ENCODE measurements at regions of chr2 and their contacts with region 1.

Region 1: GRCh38 chr2:189580658-189581353 is at the start of gene SLC40A1:
- DNase-seq: peak; percentile 67
- ATAC-seq: peak; percentile 96
- H3K4me3 ChIP-seq: peak within 1 kb of the TSS; percentile 64 to 78 (median 77)
- H3K27ac ChIP-seq: peak within 1 kb of the TSS; percentile 56
- H3K4me1 ChIP-seq: peaks cover 66% of the 10 kb centered on the region
- H3K27me3 ChIP-seq: peaks cover 0 to 11% of the 10 kb centered on the region in 2 experiments; a peak in 2 of 5 replicates
- CTCF ChIP-seq: no peak
- EP300 ChIP-seq: no peak
- POLR2A ChIP-seq: peak; percentile 73 to 91
- RAD21 ChIP-seq: peak; percentile 72
- total RNA-seq, gene SLC40A1: 10.6 and 19.2 TPM in 2 replicates

Region 2: GRCh38 chr2:188835821-188836220 is 745.0 kb before region 1 on chr2:
- CTCF ChIA-PET with region 1: no interaction called
- POLR2A ChIA-PET with region 1: no interaction called
- in situ Hi-C with region 1: no loop called
- intact Hi-C with region 1: no loop called
- DNase-seq: no peak
- ATAC-seq: no peak
- H3K4me3 ChIP-seq: no peak overlapping the region
- H3K27ac ChIP-seq: no peak overlapping the region
- H3K4me1 ChIP-seq: no peaks in the 10 kb centered on the region
- H3K27me3 ChIP-seq: no peaks in the 10 kb centered on the region
- CTCF ChIP-seq: no peak
- EP300 ChIP-seq: no peak
- POLR2A ChIP-seq: no peak
- RAD21 ChIP-seq: no peak

Region 3: GRCh38 chr2:189008403-189009262 is 572.2 kb before region 1 on chr2:
- CTCF ChIA-PET with region 1: no interaction called
- POLR2A ChIA-PET with region 1: no interaction called
- in situ Hi-C with region 1: no loop called
- intact Hi-C with region 1: no loop called
- DNase-seq: no peak
- ATAC-seq: no peak
- H3K4me3 ChIP-seq: no peak overlapping the region
- H3K27ac ChIP-seq: no peak overlapping the region
- H3K4me1 ChIP-seq: no peaks in the 10 kb centered on the region
- H3K27me3 ChIP-seq: no peaks in the 10 kb centered on the region
- CTCF ChIP-seq: no peak
- EP300 ChIP-seq: no peak
- POLR2A ChIP-seq: no peak
- RAD21 ChIP-seq: no peak

Region 4: DNA sequence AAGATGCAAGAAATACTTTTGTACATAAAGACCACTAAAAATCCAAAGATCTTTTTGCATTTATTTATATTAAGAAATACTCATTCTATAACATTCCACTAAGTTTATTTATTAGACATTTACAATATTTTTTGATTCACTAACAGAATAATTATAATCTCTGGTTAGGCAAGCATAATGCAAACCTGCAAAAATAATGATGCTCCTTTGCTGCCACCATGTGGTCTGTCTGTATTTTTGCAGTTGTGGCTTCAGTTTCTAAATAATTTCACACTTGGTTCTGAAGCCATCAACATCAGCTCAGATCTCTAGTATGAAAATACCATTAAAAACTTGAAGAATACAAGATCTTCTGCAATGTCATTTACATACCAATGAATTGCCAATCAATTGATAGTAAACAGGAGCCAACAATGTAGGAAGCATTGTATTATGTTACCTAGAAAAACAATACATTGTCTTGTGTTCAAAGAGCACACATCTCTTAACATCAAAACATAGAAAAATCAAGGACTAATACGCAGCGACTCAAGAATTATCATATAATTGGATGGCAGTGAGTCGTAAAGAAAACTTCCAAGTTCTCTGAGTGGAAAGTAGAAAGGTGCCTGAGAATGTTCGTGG is 168.4 kb before region 1 on chr2:
- CTCF ChIA-PET with region 1: no interaction called
- POLR2A ChIA-PET with region 1: no interaction called
- in situ Hi-C with region 1: no loop called
- intact Hi-C with region 1: no loop called
- DNase-seq: peak; percentile 39
- ATAC-seq: peak; percentile 75
- H3K4me3 ChIP-seq: no peak overlapping the region
- H3K27ac ChIP-seq: no peak overlapping the region
- H3K4me1 ChIP-seq: no peaks in the 10 kb centered on the region
- H3K27me3 ChIP-seq: no peaks in the 10 kb centered on the region
- CTCF ChIP-seq: peak; percentile 80
- EP300 ChIP-seq: no peak
- POLR2A ChIP-seq: no peak
- RAD21 ChIP-seq: peak; percentile 68

Region 5: GRCh38 chr2:189440947-189441708 is 139.7 kb before region 1 on chr2 and contains the start of gene WDR75:
- CTCF ChIA-PET with region 1: no interaction called
- POLR2A ChIA-PET with region 1: interaction called, 12 read pairs
- in situ Hi-C with region 1: no loop called
- intact Hi-C with region 1: loop called (anchors 1 kb)
- DNase-seq: peak; percentile 95
- ATAC-seq: peak; percentile 99
- H3K4me3 ChIP-seq: peak within 1 kb of the TSS; percentile 90 to 94 (median 93)
- H3K27ac ChIP-seq: peak within 1 kb of the TSS; percentile 82
- H3K4me1 ChIP-seq: peaks cover 45% of the 10 kb centered on the region
- H3K27me3 ChIP-seq: no peaks in the 10 kb centered on the region; a peak in 1 of 5 replicates
- CTCF ChIP-seq: no peak
- EP300 ChIP-seq: peak in 1 of 2 experiments; percentile 52; a peak in 2 of 4 replicates
- POLR2A ChIP-seq: peak; percentile 95
- RAD21 ChIP-seq: peak; percentile 27
- total RNA-seq, gene WDR75: 74.1 and 106 TPM in 2 replicates

Region 6: DNA sequence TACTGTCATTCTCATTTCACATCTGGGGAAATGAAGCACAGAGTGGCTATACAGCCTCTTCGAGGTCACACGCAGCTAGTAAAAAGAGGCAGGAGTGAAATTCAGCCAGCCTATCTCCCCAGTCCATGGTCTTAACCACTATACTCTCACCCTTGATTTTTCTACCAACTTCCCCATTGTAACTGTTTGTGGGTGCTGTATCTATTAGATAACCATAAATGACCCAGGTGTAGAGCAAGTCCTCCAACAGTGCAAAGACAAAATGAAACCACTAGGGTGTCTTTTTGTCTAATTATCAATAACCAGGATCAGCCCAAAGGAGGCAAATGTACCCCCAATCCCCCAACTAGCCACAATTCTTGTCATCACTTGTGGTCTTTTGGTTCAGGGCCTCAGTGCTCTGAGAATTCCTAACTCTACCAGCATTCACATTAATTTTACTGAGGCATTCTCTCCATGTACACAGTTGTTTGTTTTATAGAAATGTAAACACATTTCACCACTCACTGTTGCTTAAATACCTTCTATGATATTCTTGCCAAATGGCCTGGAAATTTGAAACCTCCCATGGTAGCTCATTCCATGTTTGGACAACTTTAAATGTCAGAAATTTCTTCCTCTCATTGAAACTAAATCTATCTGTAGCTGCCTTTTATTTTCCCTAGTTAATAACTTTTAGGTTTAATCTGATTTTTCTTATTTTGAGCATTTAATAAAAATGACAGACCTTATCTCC is 58.9 kb before region 1 on chr2:
- CTCF ChIA-PET with region 1: no interaction called
- POLR2A ChIA-PET with region 1: interaction called, 25 read pairs
- in situ Hi-C with region 1: no loop called
- intact Hi-C with region 1: loop called (anchors 1 kb)
- DNase-seq: peak; percentile 75
- ATAC-seq: peak; percentile 84
- H3K4me3 ChIP-seq: peak overlapping the region in 1 of 3 experiments; percentile 30; a peak in 1 of 6 replicates
- H3K27ac ChIP-seq: peak overlapping the region; percentile 57
- H3K4me1 ChIP-seq: peaks cover 36% of the 10 kb centered on the region
- H3K27me3 ChIP-seq: no peaks in the 10 kb centered on the region
- CTCF ChIP-seq: no peak
- EP300 ChIP-seq: peak in 1 of 2 experiments; percentile 68; a peak in 2 of 4 replicates
- POLR2A ChIP-seq: no peak
- RAD21 ChIP-seq: no peak

Region 7: DNA sequence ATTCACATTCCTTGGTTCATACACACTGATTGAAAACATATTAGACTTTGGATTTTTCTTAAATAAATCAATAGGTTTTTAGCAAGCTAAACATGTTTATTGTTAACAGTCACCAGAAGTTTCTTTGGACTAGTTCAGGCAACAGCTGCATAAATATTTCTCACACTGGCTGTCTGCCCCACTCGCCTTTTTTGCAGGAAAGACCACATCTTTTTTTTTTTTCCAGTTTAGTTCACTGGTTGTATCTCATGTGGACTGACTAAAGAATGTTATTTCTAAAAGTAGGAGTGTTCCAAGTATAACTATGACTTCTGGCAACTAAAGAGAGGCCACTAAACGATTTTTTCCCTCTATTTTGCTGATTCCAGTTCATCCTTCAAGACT is 31.4 kb before region 1 on chr2:
- CTCF ChIA-PET with region 1: no interaction called
- POLR2A ChIA-PET with region 1: interaction called, 18 read pairs
- in situ Hi-C with region 1: no loop called
- intact Hi-C with region 1: no loop called
- DNase-seq: no peak
- ATAC-seq: peak; percentile 19; the same call in 2 of the 3 replicates
- H3K4me3 ChIP-seq: no peak overlapping the region
- H3K27ac ChIP-seq: peak overlapping the region; percentile 54
- H3K4me1 ChIP-seq: peaks cover 46% of the 10 kb centered on the region
- H3K27me3 ChIP-seq: no peaks in the 10 kb centered on the region
- CTCF ChIP-seq: no peak
- EP300 ChIP-seq: no peak
- POLR2A ChIP-seq: no peak
- RAD21 ChIP-seq: no peak

Region 8: GRCh38 chr2:189592353-189592984 is 11.7 kb after region 1 on chr2:
- CTCF ChIA-PET with region 1: no interaction called
- POLR2A ChIA-PET with region 1: interaction called, 4 read pairs
- in situ Hi-C with region 1: no loop called
- intact Hi-C with region 1: loop called (anchors 1 kb)
- DNase-seq: no peak
- ATAC-seq: no peak
- H3K4me3 ChIP-seq: no peak overlapping the region
- H3K27ac ChIP-seq: no peak overlapping the region
- H3K4me1 ChIP-seq: no peaks in the 10 kb centered on the region
- H3K27me3 ChIP-seq: no peaks in the 10 kb centered on the region; a peak in 1 of 5 replicates
- CTCF ChIP-seq: no peak
- EP300 ChIP-seq: no peak
- POLR2A ChIP-seq: no peak
- RAD21 ChIP-seq: no peak

Region 9: DNA sequence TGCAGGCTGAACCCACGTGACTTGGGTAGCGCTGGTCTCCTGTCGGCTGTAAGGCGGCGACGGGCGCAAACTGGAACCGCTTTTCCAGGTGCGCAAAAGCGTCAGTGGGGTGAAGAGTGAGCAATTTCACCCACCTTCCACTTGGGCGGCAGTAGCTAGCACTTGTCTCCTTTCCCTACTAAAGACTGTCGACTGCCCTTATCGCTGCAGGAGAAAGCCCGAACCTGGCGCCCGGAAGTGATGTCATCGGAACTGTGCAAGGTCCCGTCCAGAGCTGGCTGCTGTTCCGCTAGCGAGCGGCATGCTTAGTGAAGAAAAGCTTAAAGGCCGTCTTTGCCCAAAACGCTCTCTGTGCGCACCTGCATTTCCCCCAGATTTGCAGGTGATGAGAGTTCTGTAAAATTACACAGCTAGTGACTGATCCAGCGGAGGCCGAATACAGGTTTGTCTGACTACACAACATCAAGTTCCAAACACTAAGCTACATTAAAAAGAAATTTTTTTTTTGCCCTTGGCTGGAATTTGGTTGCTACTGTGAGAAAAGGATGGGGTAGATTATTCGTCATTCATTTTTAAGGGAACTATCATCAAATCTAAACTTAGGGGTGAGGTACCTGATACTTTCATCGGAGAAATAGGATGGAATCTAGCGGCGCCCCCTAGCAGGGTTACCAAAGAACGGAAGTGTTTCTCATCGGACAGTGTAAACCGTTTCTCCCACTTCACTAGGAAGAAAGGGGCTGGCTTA is 181.9 kb after region 1 on chr2 and contains the start of gene OSGEPL1:
- CTCF ChIA-PET with region 1: no interaction called
- POLR2A ChIA-PET with region 1: interaction called, 10 read pairs
- in situ Hi-C with region 1: no loop called
- intact Hi-C with region 1: no loop called
- DNase-seq: peak; percentile 99
- ATAC-seq: peak; percentile 99
- H3K4me3 ChIP-seq: peak within 1 kb of the TSS; percentile 59 to 86 (median 83)
- H3K27ac ChIP-seq: peak within 1 kb of the TSS; percentile 82
- H3K4me1 ChIP-seq: peaks cover 20% of the 10 kb centered on the region
- H3K27me3 ChIP-seq: no peaks in the 10 kb centered on the region
- CTCF ChIP-seq: peak; percentile 76
- EP300 ChIP-seq: no peak; a peak in 2 of 4 replicates
- POLR2A ChIP-seq: peak; percentile 93 to 97
- RAD21 ChIP-seq: 0 out of 2 replicates have a peak, but pooled peaks have one; percentile 47
- total RNA-seq, gene OSGEPL1: 10.2 and 11.1 TPM in 2 replicates

Region 10: GRCh38 chr2:190759749-190760213 is 1179.0 kb after region 1 on chr2:
- CTCF ChIA-PET with region 1: no interaction called
- POLR2A ChIA-PET with region 1: no interaction called
- in situ Hi-C with region 1: no loop called
- intact Hi-C with region 1: no loop called
- DNase-seq: peak; percentile 49
- ATAC-seq: peak; percentile 49; the same call in 2 of the 3 replicates
- H3K4me3 ChIP-seq: no peak overlapping the region
- H3K27ac ChIP-seq: no peak overlapping the region
- H3K4me1 ChIP-seq: peaks cover 8% of the 10 kb centered on the region; the same call in 1 of the 2 replicates
- H3K27me3 ChIP-seq: no peaks in the 10 kb centered on the region
- CTCF ChIP-seq: no peak
- EP300 ChIP-seq: peak in 1 of 2 experiments; percentile 72; a peak in 1 of 4 replicates
- POLR2A ChIP-seq: no peak
- RAD21 ChIP-seq: no peak